ENCODE measurements at regions of chr9 and their contacts with region 1.

Region 1: DNA sequence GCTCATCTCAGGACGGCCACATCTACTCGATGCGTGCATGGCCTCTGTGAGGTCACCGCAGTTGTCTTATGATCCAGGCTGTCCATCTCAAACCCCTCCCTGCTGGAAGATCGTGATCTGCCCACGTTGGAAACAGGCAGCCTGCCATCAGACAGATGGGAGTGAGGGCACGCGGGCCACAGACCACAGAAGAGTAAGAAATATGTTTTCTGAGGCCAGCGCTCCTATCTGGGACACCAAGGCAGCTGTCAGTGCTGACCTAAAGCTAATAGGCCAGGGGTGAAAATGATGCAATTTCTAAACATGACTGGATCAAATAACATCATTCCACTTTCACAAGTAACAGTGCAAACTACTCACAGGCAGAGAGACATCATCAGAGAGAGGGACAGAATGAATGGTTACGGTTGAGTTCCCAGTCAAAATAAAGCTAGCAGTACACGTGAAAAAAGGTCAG is 57.1 kb upstream of the CER1 start:
- DNase-seq: no peak
- H3K4me3 ChIP-seq: no peak overlapping the region
- H3K27ac ChIP-seq: peak overlapping the region in 1 of 2 donors; percentile 38
- H3K4me1 ChIP-seq: no peaks in the 10 kb centered on the region
- H3K27me3 ChIP-seq: no peaks in the 10 kb centered on the region
- CTCF ChIP-seq: no peak
- POLR2A ChIP-seq: no peak

Region 2: DNA sequence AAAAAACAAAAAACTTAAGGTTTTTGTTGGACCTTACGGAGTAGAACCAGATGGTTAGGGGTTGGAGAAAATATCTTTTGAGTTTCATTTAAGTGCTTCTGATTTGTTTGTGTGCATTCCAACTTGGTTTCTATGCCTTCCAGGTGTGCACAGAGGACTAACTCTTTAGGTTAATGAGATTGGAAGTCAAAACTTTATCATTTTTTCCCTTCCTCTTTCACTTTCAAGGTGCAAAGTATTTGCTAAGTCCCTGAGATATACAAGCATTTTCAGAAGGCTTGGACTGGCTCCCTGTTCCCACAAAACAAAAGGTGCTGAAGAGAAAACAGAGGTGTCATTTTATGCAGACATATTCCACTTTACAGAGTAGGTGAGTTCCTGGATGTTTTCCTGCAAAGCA is 26.7 kb before region 1 on chr9:
- intact Hi-C with region 1: loop called (anchors 1 kb)
- DNase-seq: no peak
- H3K4me3 ChIP-seq: no peak overlapping the region
- H3K27ac ChIP-seq: no peak overlapping the region
- H3K4me1 ChIP-seq: no peaks in the 10 kb centered on the region
- H3K27me3 ChIP-seq: no peaks in the 10 kb centered on the region
- CTCF ChIP-seq: no peak
- POLR2A ChIP-seq: no peak